ENCODE measurements at regions of chr12 and their contacts with region 1.

Region 1: GRCh38 chr12:6533923-6534694 is at the start of gene GAPDH:
- DNase-seq: peak; percentile 96 to 98
- H3K4me3 ChIP-seq: peak within 1 kb of the TSS; percentile 97
- H3K27ac ChIP-seq: peak within 1 kb of the TSS; percentile 83
- H3K4me1 ChIP-seq: peaks cover 56% of the 10 kb centered on the region
- H3K27me3 ChIP-seq: no peaks in the 10 kb centered on the region
- CTCF ChIP-seq: no peak
- total RNA-seq, gene GAPDH: 6,143 and 8,169 TPM in 2 replicates

Region 2: GRCh38 chr12:5988659-5989116 is 545.4 kb before region 1 on chr12:
- CTCF ChIA-PET with region 1: interaction called, 3 read pairs
- POLR2A ChIA-PET with region 1: no interaction called
- intact Hi-C with region 1: loop called (anchors 10 kb)
- DNase-seq: peak; percentile 50 to 86
- H3K4me3 ChIP-seq: no peak overlapping the region
- H3K27ac ChIP-seq: no peak overlapping the region
- H3K4me1 ChIP-seq: no peaks in the 10 kb centered on the region
- H3K27me3 ChIP-seq: peaks cover 35% of the 10 kb centered on the region
- CTCF ChIP-seq: peak; percentile 99

Region 3: DNA sequence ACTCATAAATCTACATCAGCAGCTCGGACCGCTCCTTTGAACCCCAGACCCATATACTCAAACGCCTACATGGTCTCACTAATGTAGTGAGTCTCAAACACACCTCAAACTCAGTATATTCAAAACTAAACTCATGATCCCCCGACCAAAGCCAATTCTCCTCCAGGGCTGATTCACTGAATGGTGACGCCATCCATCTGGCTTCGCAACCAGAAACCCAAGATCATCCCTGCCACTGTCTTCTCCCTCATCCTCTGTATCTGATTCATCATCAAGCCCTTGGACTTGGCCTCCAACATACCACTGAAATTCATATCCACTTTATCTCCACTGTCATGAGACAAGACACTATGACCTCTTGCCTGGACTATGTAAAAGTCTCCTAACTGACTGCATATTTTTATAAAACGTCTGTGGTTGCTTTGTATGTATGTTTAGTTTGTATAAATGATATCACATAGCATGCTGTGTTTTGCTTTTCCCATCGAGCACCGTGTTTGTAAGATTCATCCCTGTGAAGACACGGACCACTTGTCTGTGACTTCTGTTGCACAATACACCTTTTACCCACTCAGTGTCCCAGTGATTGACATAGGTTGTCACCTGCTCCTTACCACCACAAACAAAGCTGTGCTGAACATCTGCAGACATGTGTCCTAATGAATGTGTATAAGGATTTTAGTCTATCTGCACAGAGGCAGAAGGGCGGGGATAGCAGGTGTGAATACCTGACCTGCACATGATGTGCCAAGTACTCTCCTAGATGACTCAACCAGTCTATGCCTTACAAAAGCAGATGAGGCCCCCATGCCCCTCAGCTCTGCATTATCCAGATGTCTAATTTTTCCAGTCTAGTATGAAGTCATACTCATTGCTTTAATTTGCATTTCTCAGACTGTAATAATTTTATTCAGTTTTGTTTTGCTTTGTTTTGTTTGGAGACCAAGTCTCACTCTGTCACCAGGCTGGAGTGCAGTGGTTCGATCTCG is 486.6 kb before region 1 on chr12:
- CTCF ChIA-PET with region 1: no interaction called
- POLR2A ChIA-PET with region 1: no interaction called
- intact Hi-C with region 1: no loop called
- DNase-seq: no peak
- H3K4me3 ChIP-seq: no peak overlapping the region
- H3K27ac ChIP-seq: no peak overlapping the region
- H3K4me1 ChIP-seq: peaks cover 18% of the 10 kb centered on the region
- H3K27me3 ChIP-seq: no peaks in the 10 kb centered on the region
- CTCF ChIP-seq: no peak

Region 4: DNA sequence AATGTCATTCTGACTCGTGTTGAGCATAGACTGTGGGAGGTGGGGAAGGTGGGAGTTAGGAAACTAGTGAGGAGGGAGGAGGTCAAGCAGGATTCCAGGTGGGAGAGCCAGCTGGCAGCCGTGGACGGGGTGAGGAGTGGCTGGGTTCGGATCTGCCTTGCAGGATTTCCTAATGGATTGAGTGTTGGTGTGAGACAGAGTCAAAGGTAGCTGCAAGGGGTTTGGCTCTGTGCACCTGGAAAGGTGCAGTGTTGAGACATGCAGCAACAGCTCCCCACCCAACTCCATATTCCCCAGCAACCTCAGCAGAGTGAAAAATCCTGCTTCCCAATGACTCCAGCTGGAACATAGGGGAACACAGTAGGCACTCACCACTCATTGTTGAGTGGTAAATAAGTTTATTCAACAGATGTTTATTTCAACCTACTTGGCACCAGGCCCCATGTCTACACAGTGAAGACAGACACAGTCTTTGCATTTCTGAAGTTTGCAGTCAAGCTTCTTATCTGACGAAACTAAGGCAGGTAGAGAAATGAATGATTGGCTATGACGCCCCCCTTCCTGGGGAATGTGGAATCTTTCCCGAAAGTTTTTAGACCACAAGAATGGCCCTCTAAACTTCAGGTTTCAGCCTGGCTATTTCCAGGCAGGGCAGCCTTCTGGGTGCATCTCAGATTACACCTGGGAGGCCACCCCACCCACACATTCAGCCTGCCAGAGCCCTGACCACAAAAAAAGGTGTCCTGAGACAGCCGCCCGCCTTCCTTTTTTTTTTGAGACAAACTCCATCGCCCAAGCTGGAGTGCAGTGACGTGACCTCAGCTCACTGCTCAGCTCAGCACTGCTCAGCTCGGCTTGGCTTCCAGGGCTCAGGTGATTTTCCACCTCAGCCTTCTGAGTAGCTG is 261.6 kb before region 1 on chr12:
- CTCF ChIA-PET with region 1: no interaction called
- POLR2A ChIA-PET with region 1: interaction called, 14 read pairs
- intact Hi-C with region 1: no loop called
- DNase-seq: peak; percentile 99
- H3K4me3 ChIP-seq: peak overlapping the region; percentile 23; the same call in 1 of the 2 replicates
- H3K27ac ChIP-seq: peak overlapping the region; percentile 98
- H3K4me1 ChIP-seq: peaks cover 64% of the 10 kb centered on the region
- H3K27me3 ChIP-seq: no peaks in the 10 kb centered on the region
- CTCF ChIP-seq: no peak

Region 5: DNA sequence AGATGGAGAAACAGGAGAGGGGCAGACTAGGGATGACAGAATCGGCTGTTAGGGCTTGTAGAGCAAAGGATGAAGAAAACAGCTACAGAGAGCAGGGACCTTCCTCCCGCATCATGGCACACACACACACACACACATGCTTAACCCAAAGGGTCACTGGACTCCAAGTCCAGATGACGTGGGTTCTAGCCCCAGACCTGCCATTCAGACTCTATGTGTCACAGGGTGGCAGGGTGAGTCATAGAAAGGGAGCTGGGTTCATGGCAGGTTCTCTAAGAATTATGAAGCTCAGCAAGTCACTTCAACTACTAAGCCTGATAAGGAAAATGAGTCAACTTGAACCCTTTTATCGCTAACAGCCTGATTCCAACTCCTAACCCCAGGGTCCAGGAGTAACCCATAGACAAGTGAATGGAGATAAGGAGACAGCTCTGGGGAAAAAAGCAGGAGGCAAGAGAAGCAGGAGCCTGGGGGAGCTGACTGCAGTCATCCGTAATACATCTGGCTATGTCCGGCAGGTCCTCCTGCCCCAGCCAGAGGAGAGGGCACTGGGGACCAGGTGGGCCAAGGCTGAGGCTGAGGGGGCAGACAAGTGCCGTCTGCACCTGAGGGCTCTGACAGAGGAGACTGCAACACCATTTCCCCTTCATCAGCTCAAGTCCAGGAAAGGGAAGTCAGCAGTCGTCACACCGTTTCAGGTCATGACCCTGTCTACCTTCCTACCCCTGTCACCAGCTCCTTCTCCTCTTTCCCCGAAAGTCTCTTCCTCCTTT is 188.6 kb before region 1 on chr12:
- CTCF ChIA-PET with region 1: interaction called, 3 read pairs
- POLR2A ChIA-PET with region 1: interaction called, 22 read pairs
- intact Hi-C with region 1: no loop called
- DNase-seq: peak; percentile 76 to 87
- H3K4me3 ChIP-seq: no peak overlapping the region
- H3K27ac ChIP-seq: peak overlapping the region; percentile 48
- H3K4me1 ChIP-seq: peaks cover 43% of the 10 kb centered on the region
- H3K27me3 ChIP-seq: no peaks in the 10 kb centered on the region
- CTCF ChIP-seq: no peak

Region 6: DNA sequence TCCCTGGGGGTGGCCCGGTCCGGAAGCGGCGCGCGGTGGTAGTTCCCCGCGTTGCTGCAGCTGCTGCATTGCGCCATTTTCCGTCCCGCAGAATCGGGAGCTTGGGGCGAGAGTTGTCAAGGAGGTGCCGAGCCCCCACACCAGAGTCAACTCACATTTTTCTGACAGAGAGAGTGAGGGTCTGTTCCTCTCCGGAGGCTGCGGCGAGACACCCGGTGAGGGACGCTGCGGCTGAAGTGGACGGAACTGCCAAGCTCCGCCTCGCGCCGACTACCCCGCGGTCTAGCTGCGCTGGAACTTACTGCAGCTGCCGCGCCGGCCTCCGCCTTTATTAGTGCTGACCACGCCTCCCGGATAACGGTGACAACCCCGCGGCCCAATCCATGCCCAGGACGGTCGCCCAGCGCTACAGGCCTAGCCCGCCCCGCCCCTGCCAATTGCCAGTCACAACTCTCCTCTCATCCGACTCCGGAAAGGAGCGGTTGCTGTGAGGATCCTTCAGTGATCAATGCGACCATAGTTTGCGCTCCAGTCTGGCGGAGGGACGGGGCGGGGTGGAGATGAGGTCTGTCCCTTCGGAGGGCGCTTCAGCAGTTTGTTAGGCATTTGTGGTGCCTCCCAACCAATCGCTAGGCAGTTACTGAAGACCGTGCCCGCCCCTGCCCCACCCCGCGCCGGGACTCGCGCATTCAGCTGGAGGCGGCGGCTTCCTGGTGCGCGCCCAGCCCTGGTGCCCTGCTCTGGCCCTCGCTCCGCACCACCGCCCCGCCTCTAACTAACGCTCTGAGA is 63.5 kb before region 1 on chr12 and contains the start of gene VAMP1:
- CTCF ChIA-PET with region 1: interaction called, 3 read pairs
- POLR2A ChIA-PET with region 1: interaction called, 18 read pairs
- intact Hi-C with region 1: loop called (anchors 1 kb)
- DNase-seq: peak; percentile 93 to 98
- H3K4me3 ChIP-seq: peak within 1 kb of the TSS; percentile 76
- H3K27ac ChIP-seq: no peak within 1 kb of the TSS
- H3K4me1 ChIP-seq: peaks cover 15% of the 10 kb centered on the region
- H3K27me3 ChIP-seq: 0 out of 2 replicates have a peak, but pooled peaks cover 6% of the 10 kb centered on the region
- CTCF ChIP-seq: no peak
- total RNA-seq, gene VAMP1: 7.7 and 9.1 TPM in 2 replicates

Region 7: DNA sequence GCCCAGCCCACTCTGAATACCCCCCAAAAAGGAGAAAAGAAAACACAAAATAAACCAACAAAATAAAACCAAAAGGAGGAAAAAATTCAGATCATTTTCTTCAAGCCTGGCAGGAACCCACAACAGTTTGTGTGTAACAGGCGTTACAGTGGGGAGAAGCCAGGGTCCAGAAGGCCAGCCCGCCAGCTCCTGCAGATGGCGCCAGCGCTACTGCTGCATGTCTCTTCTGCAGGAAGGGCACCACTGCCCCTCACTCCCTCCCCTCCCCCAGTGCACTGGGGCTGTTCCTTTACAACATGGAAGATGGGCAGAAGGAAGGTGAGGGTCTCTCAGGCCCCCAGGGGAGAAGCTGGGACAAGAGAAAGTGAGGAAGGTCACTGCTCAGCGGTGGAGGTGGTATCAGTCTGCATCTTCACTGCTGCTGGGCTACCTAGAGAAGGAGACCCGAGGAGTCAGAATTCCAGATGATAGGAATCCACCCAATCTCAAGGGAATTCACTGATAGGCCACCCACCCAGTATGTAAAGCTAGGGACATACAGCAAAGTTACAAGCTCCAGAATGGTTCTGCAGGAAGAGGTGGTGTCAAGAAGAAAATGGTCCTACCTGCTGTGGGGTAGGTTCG is 36.3 kb after region 1 on chr12:
- CTCF ChIA-PET with region 1: interaction called, 4 read pairs
- POLR2A ChIA-PET with region 1: interaction called, 17 read pairs
- intact Hi-C with region 1: no loop called
- DNase-seq: peak; percentile 35 to 62
- H3K4me3 ChIP-seq: no peak overlapping the region
- H3K27ac ChIP-seq: no peak overlapping the region
- H3K4me1 ChIP-seq: peaks cover 16% of the 10 kb centered on the region
- H3K27me3 ChIP-seq: no peaks in the 10 kb centered on the region
- CTCF ChIP-seq: peak; percentile 58; the same call in 1 of the 2 replicates

Region 8: DNA sequence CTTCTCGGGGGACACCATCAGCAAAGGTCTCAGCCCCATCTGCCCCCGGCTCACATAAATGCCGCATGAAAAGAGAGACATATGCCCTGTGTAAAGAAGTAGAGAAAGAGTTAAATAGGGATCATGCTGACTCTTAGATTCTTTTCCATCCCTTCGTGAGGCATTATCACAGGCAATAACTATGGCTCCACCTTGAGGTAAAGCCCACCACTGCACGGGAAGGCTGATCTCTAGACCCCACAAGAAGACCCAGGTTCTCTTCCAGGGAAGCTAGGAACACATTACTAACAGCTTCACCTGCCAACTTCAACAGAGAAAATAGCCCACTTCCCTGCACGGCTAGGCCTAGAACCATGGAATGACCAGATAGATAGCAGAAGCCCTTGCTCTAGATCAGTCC is 48.1 kb after region 1 on chr12:
- CTCF ChIA-PET with region 1: no interaction called
- POLR2A ChIA-PET with region 1: no interaction called
- intact Hi-C with region 1: no loop called
- DNase-seq: peak in 1 of 2 experiments; percentile 33
- H3K4me3 ChIP-seq: no peak overlapping the region
- H3K27ac ChIP-seq: no peak overlapping the region
- H3K4me1 ChIP-seq: 0 out of 2 replicates have a peak, but pooled peaks cover 3% of the 10 kb centered on the region
- H3K27me3 ChIP-seq: no peaks in the 10 kb centered on the region
- CTCF ChIP-seq: no peak

Region 9: GRCh38 chr12:7068240-7068993 is 534.3 kb after region 1 on chr12:
- CTCF ChIA-PET with region 1: no interaction called
- POLR2A ChIA-PET with region 1: interaction called, 13 read pairs
- intact Hi-C with region 1: no loop called
- DNase-seq: peak; percentile 61 to 89
- H3K4me3 ChIP-seq: no peak overlapping the region
- H3K27ac ChIP-seq: peak overlapping the region; percentile 65
- H3K4me1 ChIP-seq: peaks cover 21% of the 10 kb centered on the region
- H3K27me3 ChIP-seq: no peaks in the 10 kb centered on the region
- CTCF ChIP-seq: no peak